ENCODE measurements at regions of chr15 and their contacts with region 1.

Region 1: DNA sequence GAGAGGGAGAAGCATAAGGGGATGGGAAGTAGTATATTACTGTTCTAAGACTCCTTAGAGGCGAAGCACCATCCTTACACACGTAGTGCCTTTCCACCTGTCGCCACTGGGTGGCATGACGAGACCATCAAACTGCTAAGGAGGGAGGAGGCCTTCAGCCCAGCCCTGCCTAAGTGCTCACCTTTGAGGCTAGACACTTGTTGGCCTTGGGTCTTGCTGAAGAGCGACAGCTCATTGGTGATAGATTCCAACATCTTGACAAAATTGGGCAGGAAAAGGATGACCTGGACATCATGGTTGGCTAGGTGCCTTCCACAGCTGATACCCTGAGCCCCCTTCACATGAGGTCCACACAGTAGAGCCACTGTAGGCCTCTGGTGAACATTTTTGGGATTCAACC is 19.6 kb downstream of the CLK3 start:
- DNase-seq: no peak
- H3K4me3 ChIP-seq: no peak overlapping the region
- CTCF ChIP-seq: peak; percentile 86

Region 2: DNA sequence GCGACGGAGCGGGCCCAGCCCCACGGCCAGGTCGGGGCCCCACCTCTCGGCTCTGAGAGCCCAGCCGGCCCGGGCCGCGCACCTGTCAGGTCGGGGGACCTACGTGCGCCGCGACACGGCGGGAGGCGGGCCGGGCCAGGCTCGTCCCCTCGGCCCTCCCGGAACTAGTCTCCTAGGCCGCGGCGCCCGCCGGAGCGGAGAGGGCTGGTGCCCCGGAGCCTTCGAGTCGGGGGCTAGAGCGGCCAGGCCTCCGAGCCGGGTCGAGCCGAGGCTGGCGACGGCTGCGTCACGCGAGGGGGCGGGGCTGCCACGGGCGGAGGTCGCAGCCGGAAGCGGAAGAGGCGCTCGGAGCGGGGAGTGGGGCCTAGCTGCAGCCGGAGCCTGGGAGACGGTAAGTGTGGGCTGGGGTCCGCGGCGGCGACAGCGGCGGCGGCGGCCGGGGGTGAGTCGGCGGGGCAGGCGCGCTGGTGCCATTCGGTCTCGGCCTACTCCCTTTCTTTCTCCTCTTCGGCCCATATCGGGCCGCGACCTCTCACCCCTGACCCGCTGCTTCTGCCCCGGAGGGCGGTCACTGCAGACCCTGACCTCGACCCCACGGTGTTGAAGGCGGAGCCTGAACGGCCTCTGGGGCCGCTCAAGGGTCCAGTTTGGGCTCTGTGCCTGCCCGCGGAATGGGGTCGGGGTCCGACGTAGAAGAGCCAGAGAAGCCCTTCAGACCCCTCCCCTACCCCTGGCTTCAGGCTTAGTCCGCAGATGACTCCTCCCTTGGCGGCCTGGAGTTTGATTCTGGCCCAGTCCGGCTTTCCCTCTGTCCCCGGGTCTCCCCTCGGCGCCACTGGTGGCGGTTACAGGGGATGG is 19.5 kb before region 1 on chr15 and contains the start of gene CLK3:
- CTCF ChIA-PET with region 1: interaction called, 338 read pairs
- POLR2A ChIA-PET with region 1: interaction called, 3 read pairs
- DNase-seq: peak; percentile 41
- H3K4me3 ChIP-seq: peak within 1 kb of the TSS; percentile 97
- CTCF ChIP-seq: no peak

Region 3: GRCh38 chr15:74653426-74654123 is 18.3 kb after region 1 on chr15:
- CTCF ChIA-PET with region 1: interaction called, 246 read pairs
- POLR2A ChIA-PET with region 1: no interaction called
- DNase-seq: no peak
- H3K4me3 ChIP-seq: no peak overlapping the region
- CTCF ChIP-seq: no peak

Region 4: DNA sequence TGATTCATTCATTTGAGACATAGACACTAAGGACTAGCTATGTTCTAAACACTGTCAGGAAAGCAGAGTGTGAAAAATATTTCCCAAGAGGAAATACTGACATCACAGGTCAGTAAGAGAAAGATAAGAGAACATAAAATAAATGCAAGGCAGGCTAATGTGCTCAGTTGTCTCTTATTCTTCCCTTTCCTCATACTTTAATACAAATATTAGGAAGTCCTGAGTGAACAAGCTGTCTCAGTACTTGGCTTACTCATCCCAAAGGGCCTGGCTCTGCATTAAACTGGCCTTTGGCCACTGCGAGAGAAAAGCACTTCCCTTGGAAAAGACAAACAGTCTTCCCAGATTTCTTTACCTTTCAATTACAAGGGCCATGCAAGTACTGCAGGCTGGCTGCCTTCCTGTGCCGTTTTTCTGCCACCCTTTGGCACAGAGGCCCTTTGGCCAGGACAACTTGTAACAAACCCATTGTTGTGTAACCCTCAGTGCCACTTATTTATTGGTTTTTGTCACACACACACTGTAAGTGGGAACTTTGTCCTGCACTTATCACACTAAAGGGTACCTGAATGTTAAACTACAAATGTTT is 28.9 kb after region 1 on chr15:
- CTCF ChIA-PET with region 1: interaction called, 39 read pairs
- POLR2A ChIA-PET with region 1: no interaction called
- DNase-seq: no peak
- H3K4me3 ChIP-seq: no peak overlapping the region
- CTCF ChIP-seq: no peak

Region 5: DNA sequence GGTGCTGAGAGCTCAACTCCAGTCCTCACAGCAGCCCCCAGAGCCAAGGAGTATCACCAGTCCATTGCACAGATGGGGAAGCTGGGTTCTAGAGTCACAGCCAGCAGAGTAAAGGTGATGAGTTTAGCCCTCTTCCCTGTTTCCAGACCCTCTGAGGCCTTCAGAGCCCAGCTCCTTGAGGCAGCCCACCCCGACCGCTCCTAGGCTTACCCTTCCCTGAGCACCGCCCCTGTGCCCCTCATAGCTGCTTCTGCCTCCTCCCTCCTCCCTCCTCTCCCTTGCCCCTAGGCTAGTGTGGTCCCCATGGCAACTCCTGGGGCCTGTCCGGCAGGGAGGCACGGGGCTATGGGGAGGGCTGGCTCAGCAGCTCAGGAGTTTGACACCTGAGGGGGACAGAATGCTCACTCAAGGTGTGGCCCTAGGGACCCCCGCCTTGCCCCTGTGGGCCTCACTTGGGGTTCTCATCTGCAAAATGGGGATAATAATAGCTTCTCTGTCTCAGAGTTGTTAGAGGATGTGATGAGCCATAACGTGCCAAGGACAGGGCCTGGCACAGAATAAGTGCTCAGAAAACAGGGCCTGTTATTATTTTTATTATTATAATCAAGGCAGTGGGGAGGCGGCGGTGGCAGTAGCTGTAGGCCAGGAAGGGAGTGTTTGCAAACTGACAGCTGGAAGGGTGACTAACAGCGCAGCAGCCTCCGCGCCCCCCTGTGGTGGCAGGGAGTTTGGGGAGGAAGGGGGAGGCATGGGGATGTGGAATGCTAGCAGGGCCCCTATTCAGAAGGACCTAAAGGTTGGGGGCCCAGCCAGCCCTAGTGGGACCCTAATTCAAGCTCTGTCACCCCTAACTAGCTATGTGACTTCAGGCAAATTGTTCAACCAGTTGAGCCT is 158.2 kb after region 1 on chr15:
- CTCF ChIA-PET with region 1: interaction called, 1,672 read pairs
- POLR2A ChIA-PET with region 1: no interaction called
- DNase-seq: no peak
- H3K4me3 ChIP-seq: no peak overlapping the region
- CTCF ChIP-seq: no peak

Region 6: DNA sequence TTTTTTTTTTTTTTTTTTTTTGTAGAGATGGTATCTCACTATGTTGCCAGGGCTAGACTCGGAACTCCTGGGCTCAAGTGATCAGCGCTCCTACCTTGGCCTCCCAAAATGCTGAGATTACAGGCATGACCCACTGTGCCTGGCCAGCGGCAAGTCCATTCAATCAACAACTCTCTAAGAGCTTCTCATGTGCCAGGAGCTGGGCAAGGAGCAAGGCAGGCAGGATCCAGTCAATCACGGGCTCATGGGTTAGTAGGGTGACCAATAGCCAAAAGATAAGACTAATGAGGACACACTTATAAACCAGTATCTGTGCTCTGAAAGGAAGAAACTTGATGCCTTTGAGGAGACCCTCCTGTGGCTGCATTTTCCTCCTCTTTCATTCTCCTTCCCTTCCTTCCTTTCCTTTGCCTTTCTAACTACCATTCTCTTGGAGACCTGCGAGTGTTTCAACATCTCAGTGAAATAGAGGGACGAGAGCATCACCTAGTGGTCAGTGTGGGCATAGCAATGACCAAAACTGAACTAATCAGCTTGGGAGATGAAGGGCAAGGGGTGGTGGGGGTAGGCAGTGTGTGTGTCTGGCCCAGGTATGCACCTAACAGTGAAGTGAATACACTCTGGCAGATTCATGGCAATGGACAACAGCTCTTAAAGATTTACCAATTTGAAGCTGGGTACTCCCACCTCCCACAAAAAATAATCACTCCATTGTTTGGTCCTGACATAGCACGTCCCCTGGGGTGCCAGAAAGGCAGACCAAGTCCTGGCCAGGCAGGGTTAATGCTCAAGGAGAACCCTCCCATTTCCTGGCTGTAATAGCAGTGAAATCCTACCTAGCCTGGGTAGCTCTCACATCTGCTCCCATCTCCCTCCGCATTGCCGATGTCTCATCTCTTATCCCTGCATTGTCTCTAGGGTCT is 315.1 kb after region 1 on chr15:
- CTCF ChIA-PET with region 1: interaction called, 53 read pairs
- POLR2A ChIA-PET with region 1: no interaction called
- DNase-seq: no peak
- H3K4me3 ChIP-seq: no peak overlapping the region
- CTCF ChIP-seq: peak; percentile 93